CD14-positive monocyte (primary cell): ENCODE measurements at regions of chr17 and their contacts with region 1.

Region 1: DNA sequence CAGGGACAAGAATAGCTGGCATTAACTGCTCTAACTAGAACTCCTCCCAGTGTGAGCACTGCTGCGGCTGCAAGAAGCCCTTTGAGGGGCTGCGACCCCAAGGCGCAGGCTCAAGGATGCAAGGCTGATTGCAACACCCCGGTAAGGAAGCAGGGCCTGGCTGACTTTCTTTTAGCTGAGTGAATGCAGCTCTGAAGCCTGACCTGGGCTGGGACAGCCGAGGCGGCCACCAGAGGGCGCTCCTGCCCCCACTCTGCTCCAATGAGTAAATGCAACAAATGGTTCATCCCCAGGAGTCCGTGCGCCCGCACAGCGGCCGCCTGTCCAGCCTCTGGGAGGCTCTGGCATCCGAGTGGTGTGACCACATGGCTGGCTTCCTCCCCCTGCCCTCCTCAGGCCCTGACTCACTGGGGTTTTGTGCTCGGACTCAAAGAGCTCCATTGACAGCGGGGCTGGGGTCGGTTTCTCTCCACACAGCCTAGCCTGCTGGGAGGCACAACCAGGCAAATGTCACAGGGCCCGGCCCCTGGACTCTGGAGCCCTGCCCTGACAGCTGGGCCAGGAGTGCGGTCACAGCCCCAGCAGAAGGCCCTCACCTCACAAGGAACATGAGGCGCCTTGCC is at the start of gene SMIM5:
- DNase-seq: peak; percentile 76 to 85 (median 78)
- H3K4me3 ChIP-seq: no peak within 1 kb of the TSS
- H3K4me3 Mint-ChIP-seq: no peak within 1 kb of the TSS
- H3K27ac ChIP-seq: no peak within 1 kb of the TSS
- H3K27ac Mint-ChIP-seq: peak within 1 kb of the TSS in 1 of 7 donors; percentile 76
- H3K4me1 ChIP-seq: peaks cover 5 to 13% of the 10 kb centered on the region in 2 donors
- H3K4me1 Mint-ChIP-seq: peaks cover 11% of the 10 kb centered on the region
- H3K27me3 ChIP-seq: no peaks in the 10 kb centered on the region
- H3K27me3 Mint-ChIP-seq: peaks cover 2 to 8% (median 4%) of the 10 kb centered on the region in 3 donors
- CTCF ChIP-seq: peak; percentile 87
- polyA plus RNA-seq, gene SMIM5: 0.15 to 3.3 (median 0.43) TPM

Region 2: GRCh38 chr17:75476271-75476671 is 156.7 kb before region 1 on chr17:
- intact Hi-C with region 1: no loop called
- DNase-seq: no peak
- H3K4me3 ChIP-seq: no peak overlapping the region
- H3K4me3 Mint-ChIP-seq: no peak overlapping the region
- H3K27ac ChIP-seq: no peak overlapping the region
- H3K27ac Mint-ChIP-seq: peak overlapping the region in 1 of 7 donors; percentile 53
- H3K4me1 ChIP-seq: peaks cover 9 to 13% of the 10 kb centered on the region in 2 donors
- H3K4me1 Mint-ChIP-seq: peaks cover 16% of the 10 kb centered on the region
- H3K27me3 ChIP-seq: no peaks in the 10 kb centered on the region
- H3K27me3 Mint-ChIP-seq: peaks cover 0 to 5% (median 0%) of the 10 kb centered on the region in 3 donors
- CTCF ChIP-seq: no peak

Region 3: DNA sequence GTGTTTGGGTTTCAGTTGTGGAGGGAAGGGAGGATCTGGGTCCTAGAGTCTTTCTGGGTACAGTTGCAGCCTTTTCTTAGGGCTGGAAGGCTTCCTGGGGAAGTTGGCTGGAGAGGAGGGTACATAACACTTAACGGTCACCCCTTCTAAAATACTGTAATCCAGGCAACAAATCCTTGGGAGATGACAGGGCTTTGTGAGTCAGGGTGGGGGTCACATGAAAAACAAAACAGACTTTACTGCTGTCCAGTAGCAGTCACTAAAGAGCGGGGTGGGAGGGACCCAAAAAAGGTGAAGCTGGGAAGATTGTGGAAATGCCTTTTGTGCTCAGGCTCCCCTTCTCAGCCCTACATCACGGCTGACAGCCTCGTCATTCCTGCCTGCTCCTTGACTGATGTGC is 40.5 kb after region 1 on chr17:
- intact Hi-C with region 1: loop called in 1 of 2 experiments (anchors 5 kb)
- DNase-seq: no peak
- H3K4me3 ChIP-seq: no peak overlapping the region
- H3K4me3 Mint-ChIP-seq: no peak overlapping the region
- H3K27ac ChIP-seq: peak overlapping the region in 1 of 2 donors; percentile 3
- H3K27ac Mint-ChIP-seq: peak overlapping the region in 5 of 7 donors; percentile 20 to 60 (median 50)
- H3K4me1 ChIP-seq: peaks cover 4 to 8% of the 10 kb centered on the region in 2 donors
- H3K4me1 Mint-ChIP-seq: peaks cover 4% of the 10 kb centered on the region
- H3K27me3 ChIP-seq: no peaks in the 10 kb centered on the region
- H3K27me3 Mint-ChIP-seq: peaks cover 0 to 1% (median 0%) of the 10 kb centered on the region in 3 donors
- CTCF ChIP-seq: no peak

Region 4: DNA sequence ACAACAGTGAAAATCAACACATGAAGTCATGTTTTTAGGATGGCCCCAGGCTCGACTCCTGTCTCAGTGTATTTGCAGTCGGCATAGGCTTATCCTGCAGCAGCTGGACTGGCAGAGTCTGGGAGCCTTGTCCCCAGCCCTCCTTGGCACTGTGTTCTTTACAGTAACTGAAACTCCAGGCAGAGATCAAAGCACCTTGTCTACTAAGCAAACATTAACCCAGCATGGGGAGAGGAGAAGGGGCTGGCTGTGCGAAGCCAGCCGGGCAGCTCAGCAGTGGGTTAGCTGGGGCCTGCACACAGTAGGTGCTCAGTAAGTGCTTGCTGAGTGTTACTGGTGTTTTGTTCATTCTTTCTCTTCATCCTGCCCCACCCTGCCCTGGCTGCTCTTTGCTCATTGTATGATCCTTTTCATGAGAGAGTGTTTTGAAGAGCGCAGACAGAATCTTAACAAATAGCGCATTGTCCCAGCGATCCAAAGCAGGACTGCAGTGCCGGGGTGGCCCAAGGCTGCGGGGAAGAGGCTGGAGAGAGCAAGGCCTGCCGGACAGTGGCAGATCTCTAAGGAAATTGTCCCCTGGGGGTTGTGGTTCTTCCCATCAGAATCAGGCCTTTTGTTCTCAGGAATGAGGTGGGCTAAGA is 64.8 kb after region 1 on chr17:
- intact Hi-C with region 1: no loop called
- DNase-seq: no peak
- H3K4me3 ChIP-seq: no peak overlapping the region
- H3K4me3 Mint-ChIP-seq: no peak overlapping the region
- H3K27ac ChIP-seq: no peak overlapping the region
- H3K27ac Mint-ChIP-seq: peak overlapping the region in 3 of 7 donors; percentile 10 to 31 (median 24)
- H3K4me1 ChIP-seq: no peaks in the 10 kb centered on the region
- H3K4me1 Mint-ChIP-seq: no peaks in the 10 kb centered on the region
- H3K27me3 ChIP-seq: no peaks in the 10 kb centered on the region
- H3K27me3 Mint-ChIP-seq: no peaks in the 10 kb centered on the region
- CTCF ChIP-seq: no peak